ENCODE measurements at regions of chr7 and their contacts with region 1.

Region 1: DNA sequence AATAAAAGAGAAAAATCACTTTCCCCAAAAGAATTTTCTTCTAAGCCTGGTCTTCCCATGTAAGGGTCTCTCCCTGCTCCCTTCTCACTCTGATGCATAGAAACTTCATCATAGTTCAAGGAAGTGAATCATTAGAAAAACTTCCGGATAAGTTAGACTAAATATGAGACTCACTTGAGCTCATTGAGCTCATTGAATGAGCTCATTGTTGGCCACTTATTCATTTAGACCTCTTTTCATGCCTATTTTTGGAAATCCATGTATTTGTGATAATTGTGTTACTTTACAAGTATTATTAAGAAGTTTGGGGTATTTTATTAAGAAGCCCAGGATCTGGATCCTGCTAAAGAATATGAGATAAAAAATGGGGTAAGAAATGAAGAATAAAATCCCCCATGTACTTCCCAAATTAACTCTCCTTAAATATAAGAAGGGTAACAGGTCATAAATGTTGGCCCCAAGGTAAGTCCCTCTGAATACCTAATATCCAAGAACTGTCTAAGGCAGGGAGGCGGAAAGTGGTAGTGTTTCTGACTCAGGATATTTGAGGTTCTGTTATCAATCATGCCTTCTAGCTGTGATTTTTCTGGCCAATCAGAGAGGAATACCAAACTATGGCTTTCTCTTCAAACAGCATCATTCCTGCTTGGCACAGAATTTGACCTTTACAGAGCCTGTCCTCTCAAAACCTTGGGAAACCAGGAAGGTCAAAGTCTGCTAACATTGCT is 236.5 kb upstream of the PTN start:
- DNase-seq: no peak
- ATAC-seq: peak in 2 of 4 donors; percentile 52 to 74
- H3K4me3 ChIP-seq: no peak overlapping the region
- H3K27ac ChIP-seq: no peak overlapping the region
- H3K4me1 ChIP-seq: peaks cover 0 to 11% (median 0%) of the 10 kb centered on the region in 12 donors
- H3K27me3 ChIP-seq: no peaks in the 10 kb centered on the region
- CTCF ChIP-seq: no peak
- POLR2A ChIP-seq: no peak

Region 2: DNA sequence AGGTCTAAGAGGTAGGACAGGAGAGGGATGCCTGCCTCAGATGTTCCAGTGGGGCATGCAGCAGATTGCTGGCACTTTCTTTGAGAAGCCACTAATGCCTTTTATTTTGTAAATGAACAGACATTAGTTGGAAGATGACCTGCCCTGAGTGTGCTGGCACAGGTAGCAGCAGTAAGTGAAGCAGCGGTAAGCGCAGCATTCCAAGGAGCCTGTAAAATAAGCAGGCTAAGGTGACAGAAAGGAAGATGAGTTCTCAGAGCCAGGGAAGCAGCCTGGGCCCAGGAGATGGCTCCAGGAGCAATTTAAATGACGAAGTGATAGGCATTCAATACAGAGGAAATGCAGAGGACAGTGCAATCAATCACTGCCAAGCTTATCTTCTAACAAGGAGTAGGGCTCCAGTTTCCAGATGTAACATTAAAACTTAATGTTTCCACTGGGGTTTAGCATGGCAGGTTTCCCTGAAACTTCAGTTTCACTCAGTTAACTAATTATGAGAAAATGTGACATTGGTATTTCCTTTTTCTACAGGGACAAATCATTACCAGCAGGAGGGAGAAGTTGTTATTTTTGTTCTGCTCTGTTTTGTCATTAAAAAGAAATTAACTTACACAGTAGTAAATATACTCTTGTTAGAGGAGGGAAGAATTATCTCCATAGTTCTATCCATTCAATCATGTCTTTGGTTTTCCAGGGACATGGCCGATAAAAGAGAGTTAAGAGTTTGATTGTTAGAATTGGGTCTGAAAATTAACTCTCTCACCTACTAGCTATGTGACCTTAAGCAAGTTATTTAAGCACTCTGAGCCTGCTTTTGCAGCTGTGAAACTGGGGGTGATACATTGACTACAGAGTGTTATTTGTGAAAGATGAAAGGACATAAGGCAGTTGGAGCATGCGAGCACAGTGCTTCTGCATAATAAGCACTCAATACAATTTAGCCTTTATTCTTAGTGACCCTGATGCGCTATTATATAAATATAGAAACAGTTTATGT is 139.9 kb before region 1 on chr7:
- intact Hi-C with region 1: loop called in 1 of 10 experiments (anchors 5 kb)
- DNase-seq: no peak
- ATAC-seq: no peak
- H3K4me3 ChIP-seq: no peak overlapping the region
- H3K27ac ChIP-seq: peak overlapping the region in 6 of 12 donors; percentile 6 to 49 (median 36)
- H3K4me1 ChIP-seq: peaks cover 0 to 17% (median 0%) of the 10 kb centered on the region in 12 donors
- H3K27me3 ChIP-seq: no peaks in the 10 kb centered on the region
- CTCF ChIP-seq: no peak
- POLR2A ChIP-seq: no peak